Endothelial cell of umbilical vein (primary cell): ENCODE measurements at regions of chr10 and their contacts with region 1.

Region 1: GRCh38 chr10:73940634-73941221 is 29.8 kb downstream of the PLAU start:
- DNase-seq: peak; percentile 71
- H3K4me3 ChIP-seq: no peak overlapping the region
- H3K27ac ChIP-seq: peak overlapping the region; percentile 47
- H3K4me1 ChIP-seq: peaks cover 19% of the 10 kb centered on the region
- H3K27me3 ChIP-seq: no peaks in the 10 kb centered on the region
- CTCF ChIP-seq: peak; percentile 96 to 97
- POLR2A ChIP-seq: no peak

Region 2: DNA sequence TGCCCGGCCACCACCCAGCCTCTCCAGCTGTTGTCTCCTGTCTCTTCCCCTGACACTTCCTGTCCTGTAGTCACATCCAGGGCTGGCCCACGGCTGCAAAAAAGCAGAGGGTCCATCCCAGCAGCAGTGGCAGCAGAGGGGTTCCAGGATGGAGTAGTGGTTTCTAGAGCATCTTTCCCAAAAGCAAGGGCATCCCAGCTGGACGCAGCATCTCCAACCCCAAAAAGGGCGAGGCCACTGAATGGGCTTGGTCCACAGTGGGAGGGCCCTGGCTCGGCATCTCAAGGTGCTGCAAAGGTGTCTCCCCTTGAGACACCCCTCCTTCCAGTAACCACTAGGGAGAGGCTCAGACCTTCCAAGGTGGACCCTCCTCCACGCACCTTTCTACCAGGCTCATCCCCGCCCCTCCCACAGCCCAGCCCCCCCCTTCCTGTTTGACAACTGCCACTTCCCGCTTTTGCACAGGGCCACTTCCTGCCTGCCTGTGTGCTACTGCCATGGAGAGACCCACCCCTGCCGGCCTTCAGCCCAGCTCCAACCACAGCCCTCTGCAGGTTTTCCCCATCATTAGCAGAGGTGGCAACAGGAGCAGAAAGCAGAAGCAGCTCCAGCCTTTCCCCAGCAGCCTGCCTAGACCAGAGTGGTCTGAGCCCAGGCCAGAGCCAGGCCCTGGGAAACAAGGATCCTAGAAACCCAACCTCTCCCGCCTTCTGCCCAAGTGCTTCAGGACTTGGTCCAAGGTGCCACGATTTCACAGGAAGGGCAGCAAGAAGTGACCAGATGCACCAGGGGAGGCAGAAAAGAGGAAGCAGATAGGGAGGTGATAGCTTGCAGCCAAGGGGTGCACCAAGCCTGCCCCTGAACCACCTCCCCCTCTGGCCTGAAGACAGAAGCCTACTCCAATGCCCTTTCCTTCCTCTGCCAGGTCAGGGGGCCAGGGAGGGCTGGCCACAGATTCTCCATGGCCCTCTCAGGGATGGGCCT is 75.0 kb before region 1 on chr10:
- CTCF ChIA-PET with region 1: no interaction called
- POLR2A ChIA-PET with region 1: no interaction called
- dilution Hi-C with region 1: no loop called
- intact Hi-C with region 1: no loop called
- DNase-seq: no peak
- H3K4me3 ChIP-seq: no peak overlapping the region
- H3K27ac ChIP-seq: no peak overlapping the region
- H3K4me1 ChIP-seq: peaks cover 14% of the 10 kb centered on the region
- H3K27me3 ChIP-seq: no peaks in the 10 kb centered on the region
- CTCF ChIP-seq: no peak
- POLR2A ChIP-seq: no peak

Region 3: DNA sequence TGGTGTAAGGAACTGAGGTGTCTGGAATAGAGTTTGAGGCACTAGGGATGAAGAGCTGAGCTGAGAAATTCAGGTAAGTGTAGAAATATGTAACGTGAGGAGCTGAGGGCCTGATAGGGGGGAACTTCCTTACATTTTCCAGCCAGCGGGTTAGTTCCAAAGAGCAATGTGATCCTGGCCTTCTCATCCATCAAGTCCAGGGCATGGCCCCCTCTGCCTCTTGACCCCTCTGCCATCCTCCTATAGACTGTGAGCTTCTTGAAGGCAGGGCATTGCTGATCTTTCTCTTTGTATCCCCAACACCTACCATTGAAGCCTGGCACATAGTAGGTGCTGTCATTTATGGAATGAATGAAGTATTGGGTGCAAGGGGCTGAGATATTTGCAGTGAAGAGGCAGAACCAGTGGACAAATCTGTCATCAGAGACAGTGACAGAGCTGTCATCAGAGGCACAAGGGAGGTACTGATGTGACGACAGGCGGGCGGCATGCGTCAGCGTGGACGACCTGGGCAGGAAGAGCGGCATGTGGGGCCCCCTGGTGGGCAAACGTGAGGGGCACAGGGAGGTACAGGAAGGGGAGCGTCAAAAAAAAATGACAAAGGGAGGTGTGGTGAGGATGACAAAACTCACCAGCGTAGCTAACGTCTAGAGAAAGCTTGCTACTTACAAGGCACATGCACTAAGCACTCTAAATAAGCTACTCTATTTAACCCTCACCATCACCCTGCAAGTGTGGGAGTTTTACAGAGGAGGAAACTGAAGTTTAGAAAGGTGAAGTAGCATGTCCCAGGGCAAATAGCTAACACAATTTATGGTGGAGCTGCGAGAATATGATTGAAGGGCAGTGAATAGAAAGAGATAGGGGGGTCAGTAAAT is 61.2 kb before region 1 on chr10:
- CTCF ChIA-PET with region 1: interaction called, 439 read pairs
- POLR2A ChIA-PET with region 1: no interaction called
- dilution Hi-C with region 1: no loop called
- intact Hi-C with region 1: no loop called
- DNase-seq: peak; percentile 82
- H3K4me3 ChIP-seq: no peak overlapping the region
- H3K27ac ChIP-seq: no peak overlapping the region
- H3K4me1 ChIP-seq: peaks cover 6% of the 10 kb centered on the region
- H3K27me3 ChIP-seq: no peaks in the 10 kb centered on the region
- CTCF ChIP-seq: peak; percentile 93 to 98
- POLR2A ChIP-seq: no peak

Region 4: DNA sequence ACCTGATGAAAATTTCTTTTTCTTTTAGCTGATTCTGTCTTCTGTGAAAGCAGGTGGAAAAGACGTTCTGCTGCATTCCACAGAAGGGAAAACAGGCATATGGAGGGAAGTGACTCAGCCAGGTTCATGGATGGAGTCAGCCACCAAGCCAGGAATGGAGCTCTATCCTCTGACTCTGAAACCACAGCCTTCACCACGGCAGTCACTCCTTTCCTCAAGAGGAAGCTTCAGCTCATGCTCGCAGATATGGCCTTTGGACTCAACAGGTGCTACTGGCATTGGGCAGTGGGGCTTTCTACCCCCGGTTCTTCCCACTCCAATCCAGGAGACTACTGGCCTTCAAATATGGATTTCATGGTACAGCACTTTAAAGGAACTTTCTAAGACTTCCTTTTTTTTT is 41.3 kb before region 1 on chr10:
- CTCF ChIA-PET with region 1: interaction called, 18 read pairs
- POLR2A ChIA-PET with region 1: no interaction called
- dilution Hi-C with region 1: no loop called
- intact Hi-C with region 1: loop called (anchors 1 kb)
- DNase-seq: peak; percentile 92
- H3K4me3 ChIP-seq: no peak overlapping the region
- H3K27ac ChIP-seq: peak overlapping the region; percentile 79
- H3K4me1 ChIP-seq: peaks cover 27% of the 10 kb centered on the region
- H3K27me3 ChIP-seq: no peaks in the 10 kb centered on the region
- CTCF ChIP-seq: no peak
- POLR2A ChIP-seq: no peak

Region 5: DNA sequence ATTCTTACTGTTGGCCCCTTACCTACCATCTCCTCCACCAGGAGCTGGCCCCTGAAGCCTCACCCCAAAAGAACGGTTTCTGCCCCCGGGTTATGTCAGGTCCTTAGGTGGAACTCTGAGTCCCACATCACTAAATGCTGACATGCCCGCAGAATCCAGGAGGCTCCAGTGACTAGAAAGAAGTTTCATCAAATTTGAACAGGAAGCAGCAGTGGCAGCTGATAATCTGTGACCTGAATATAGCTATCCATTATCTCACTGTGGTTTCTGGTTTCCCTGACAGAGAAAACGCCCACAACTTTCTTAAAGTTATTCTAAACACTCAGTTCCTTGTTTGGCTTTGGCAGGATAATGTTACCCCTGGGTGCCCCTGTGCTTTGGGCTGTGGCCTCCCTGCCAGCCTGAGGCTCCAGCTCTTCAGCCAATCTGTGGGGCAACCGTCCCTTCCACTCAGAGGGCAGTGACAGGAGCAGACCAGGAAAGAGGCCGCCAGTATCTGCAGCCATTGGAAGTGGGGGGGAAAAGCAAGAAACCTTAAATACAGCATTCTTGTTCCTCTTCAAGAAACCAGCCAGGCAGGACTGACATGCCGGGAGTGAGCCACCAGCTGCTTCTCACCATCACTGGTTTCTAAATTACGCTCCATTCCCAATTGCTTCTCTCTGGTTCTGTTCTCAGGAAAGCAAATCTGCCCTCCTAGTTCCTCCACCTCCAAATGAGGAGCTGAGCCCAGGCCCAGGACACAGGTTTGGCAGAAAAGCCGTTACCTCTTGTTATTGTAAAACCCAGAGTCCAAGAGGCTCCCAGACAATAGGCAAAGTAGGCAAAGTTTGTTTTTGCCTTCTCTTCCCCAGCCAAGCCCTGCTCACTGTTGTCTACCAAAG is 16.0 kb after region 1 on chr10:
- CTCF ChIA-PET with region 1: interaction called, 22 read pairs
- POLR2A ChIA-PET with region 1: no interaction called
- dilution Hi-C with region 1: no loop called
- intact Hi-C with region 1: no loop called
- DNase-seq: peak; percentile 33
- H3K4me3 ChIP-seq: no peak overlapping the region
- H3K27ac ChIP-seq: no peak overlapping the region
- H3K4me1 ChIP-seq: peaks cover 10% of the 10 kb centered on the region
- H3K27me3 ChIP-seq: no peaks in the 10 kb centered on the region
- CTCF ChIP-seq: no peak
- POLR2A ChIP-seq: no peak

Region 6: GRCh38 chr10:73997787-73998622 is 57.3 kb after region 1 on chr10 and contains the start of gene VCL:
- CTCF ChIA-PET with region 1: interaction called, 11 read pairs
- POLR2A ChIA-PET with region 1: interaction called, 4 read pairs
- dilution Hi-C with region 1: no loop called
- intact Hi-C with region 1: loop called (anchors 2 kb)
- DNase-seq: peak; percentile 99
- H3K4me3 ChIP-seq: peak within 1 kb of the TSS; percentile 73 to 91 (median 86)
- H3K27ac ChIP-seq: peak within 1 kb of the TSS; percentile 83
- H3K4me1 ChIP-seq: peaks cover 24% of the 10 kb centered on the region
- H3K27me3 ChIP-seq: no peaks in the 10 kb centered on the region
- CTCF ChIP-seq: no peak
- POLR2A ChIP-seq: peak; percentile 99
- total RNA-seq, gene VCL: 203 and 231 TPM in 2 replicates

Region 7: DNA sequence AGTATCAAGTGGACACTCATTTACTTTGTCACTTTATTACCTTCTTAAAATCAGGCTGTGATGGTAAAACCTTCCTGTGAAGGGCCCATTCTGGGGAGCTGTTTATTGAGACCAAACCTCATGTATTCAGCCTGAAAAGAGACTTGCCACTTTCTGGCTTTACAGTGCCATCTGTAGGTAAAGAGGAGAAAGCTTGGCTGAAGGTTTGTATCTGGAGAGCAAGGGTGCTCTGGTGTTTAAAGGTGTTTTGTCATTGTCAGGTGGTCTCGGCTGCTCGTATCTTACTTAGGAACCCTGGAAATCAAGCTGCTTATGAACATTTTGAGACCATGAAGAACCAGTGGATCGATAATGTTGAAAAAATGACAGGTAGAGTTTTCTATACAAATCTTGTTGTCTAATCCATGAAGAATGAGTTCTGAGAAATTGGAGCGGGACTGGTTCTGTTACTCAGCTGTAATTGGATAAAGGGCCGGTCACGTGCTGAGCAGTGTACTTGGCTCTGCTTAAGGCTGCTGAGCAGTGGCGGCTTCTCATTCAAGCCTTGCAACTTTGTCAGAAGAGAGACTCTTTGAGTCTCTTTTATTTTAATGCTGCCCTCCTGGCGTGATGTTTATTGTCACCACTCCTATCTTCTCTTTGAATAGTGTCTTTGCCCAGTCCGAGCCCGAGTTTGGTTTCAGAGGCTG is 163.0 kb after region 1 on chr10:
- CTCF ChIA-PET with region 1: interaction called, 11 read pairs
- POLR2A ChIA-PET with region 1: no interaction called
- dilution Hi-C with region 1: no loop called
- intact Hi-C with region 1: no loop called
- DNase-seq: peak; percentile 37
- H3K4me3 ChIP-seq: no peak overlapping the region
- H3K27ac ChIP-seq: no peak overlapping the region
- H3K4me1 ChIP-seq: no peaks in the 10 kb centered on the region
- H3K27me3 ChIP-seq: no peaks in the 10 kb centered on the region
- CTCF ChIP-seq: peak; percentile 24 to 41
- POLR2A ChIP-seq: no peak